Left colon (tissue), 2 donors: ENCODE measurements at regions of chr17 and their contacts with region 1.

Region 1: DNA sequence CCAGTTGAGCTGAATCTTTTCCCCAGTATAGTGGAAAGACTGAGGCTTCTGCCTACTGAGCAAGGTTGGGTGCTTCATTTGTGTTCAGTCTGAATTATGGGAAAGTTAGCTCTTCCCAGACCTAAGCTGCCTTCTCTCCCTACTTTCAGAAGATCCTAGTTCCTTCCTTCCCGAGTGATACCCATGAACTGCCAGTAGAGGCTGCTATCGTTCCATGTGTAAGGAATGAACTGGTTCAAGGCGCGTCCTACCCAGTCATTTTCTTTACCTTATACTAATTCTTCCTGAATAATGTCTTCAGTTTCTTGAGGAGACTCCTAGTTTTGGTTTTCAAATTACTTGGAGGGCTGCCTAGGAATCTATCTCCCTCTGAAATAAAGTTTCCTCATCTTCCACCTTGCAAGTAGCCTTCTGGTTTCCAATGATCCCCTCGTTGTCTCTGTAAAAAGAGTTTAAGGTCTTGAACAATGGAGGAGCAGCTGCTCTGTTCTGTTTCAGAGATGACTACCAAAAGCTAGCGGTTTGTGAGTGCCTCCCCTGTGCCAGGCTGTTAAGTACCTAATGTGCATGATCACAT is 934 bp upstream of the AOC2 start:
- DNase-seq: no peak
- ATAC-seq: peak; percentile 86

Region 2: GRCh38 chr17:42928714-42929496 is 85.5 kb after region 1 on chr17:
- intact Hi-C with region 1: loop called in 1 of 2 experiments (anchors 5 kb)
- DNase-seq: peak; percentile 15 to 29
- ATAC-seq: peak; percentile 88

Region 3: GRCh38 chr17:42937712-42938596 is 94.5 kb after region 1 on chr17:
- intact Hi-C with region 1: loop called in 1 of 2 experiments (anchors 5 kb)
- DNase-seq: peak in 1 of 2 donors; percentile 23
- ATAC-seq: peak; percentile 77